Right cardiac atrium (tissue), 5 donors: ENCODE measurements at regions of chr16 and their contacts with region 1.

Region 1: GRCh38 chr16:65121870-65122723 is at the start of gene CDH11:
- DNase-seq: peak; percentile 73 to 90 (median 89)
- ATAC-seq: peak; percentile 67 to 69
- H3K4me3 ChIP-seq: peak within 1 kb of the TSS; percentile 63
- H3K27ac ChIP-seq: peak within 1 kb of the TSS; percentile 47
- H3K4me1 ChIP-seq: no peaks in the 10 kb centered on the region
- H3K27me3 ChIP-seq: no peaks in the 10 kb centered on the region
- total RNA-seq, gene CDH11: 16.6 to 36.9 (median 26.3) TPM

Region 2: DNA sequence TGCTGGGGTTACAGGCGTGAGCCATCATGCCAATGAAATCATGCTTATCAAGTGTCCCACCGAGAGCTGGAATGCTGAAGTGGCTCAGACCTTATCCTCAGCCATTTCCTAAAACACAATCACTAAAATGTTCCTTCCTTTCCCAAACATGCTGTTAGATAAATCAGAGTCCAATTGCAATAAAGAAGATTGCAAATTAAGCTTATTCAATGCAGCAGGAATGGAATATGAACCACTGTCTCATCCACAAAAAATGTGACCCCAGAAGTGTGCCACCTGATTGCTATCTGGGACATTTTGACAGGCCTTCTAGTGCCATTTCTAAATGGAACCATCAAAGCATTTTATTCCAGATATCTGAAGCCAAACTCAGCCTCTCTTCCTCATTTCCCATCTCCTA is 205.2 kb after region 1 on chr16:
- intact Hi-C with region 1: loop called in 1 of 4 experiments (anchors 5 kb)
- DNase-seq: peak in 1 of 3 donors; percentile 35
- ATAC-seq: peak; percentile 41 to 77
- H3K4me3 ChIP-seq: no peak overlapping the region
- H3K27ac ChIP-seq: no peak overlapping the region
- H3K4me1 ChIP-seq: no peaks in the 10 kb centered on the region
- H3K27me3 ChIP-seq: no peaks in the 10 kb centered on the region